ENCODE measurements at regions of chr16 and their contacts with region 1.

Region 1: DNA sequence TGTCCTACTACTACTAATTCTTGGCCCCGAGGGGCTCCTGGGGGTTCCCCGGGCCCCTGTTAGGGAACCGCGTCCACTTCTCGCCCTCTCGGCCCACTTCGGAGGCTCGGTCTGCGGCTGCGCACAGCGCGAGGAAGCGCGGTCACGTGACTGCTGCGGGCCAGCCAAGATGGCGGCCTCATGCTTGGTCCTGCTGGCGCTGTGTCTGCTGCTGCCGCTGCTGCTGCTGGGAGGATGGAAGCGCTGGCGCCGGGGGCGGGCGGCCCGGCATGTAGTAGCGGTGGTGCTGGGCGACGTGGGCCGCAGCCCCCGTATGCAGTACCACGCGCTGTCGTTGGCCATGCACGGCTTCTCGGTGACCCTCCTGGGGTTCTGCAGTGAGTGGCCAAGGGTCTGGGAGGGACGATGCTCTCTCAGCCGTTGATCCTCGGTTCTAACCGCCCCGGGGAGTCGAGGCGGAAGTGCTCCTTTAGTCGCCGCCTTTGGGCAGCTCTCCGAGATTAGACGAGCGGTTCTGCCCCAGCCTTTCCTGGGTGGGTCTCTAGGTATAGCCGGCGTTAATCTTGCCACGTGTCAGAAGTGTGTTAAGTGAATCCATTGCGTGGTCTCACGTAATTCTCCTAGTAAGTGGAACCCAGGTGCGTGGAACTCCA is at the start of gene ALG1:
- DNase-seq: peak; percentile 92
- H3K4me3 Mint-ChIP-seq: peak within 1 kb of the TSS; percentile 97
- H3K27ac Mint-ChIP-seq: peak within 1 kb of the TSS; percentile 86
- H3K4me1 Mint-ChIP-seq: peaks cover 31% of the 10 kb centered on the region
- H3K27me3 Mint-ChIP-seq: no peaks in the 10 kb centered on the region
- total RNA-seq, gene ALG1: 8.6 to 8.9 TPM

Region 2: DNA sequence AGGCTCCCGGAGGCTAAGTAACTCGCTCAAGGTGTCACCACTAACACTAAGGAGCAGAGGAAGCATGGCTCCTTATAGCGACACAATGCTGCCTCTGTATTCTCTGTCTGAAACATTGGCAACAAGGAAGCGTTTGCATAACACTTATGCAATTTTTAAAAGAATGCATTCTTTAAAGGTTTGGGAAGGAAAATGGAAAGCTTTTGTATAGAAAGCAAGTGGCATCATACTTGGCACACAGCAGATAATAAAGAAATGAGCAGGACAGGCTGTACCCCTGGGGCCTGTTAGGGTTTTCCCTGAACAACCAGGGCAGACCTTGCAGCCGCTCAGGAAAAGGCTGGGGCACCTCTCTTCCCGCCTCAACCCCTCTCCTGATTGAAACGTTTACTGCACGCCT is 171.8 kb before region 1 on chr16:
- CTCF ChIA-PET with region 1: no interaction called
- intact Hi-C with region 1: no loop called
- DNase-seq: no peak
- H3K4me3 Mint-ChIP-seq: no peak overlapping the region
- H3K27ac Mint-ChIP-seq: no peak overlapping the region
- H3K4me1 Mint-ChIP-seq: no peaks in the 10 kb centered on the region
- H3K27me3 Mint-ChIP-seq: peaks cover 6% of the 10 kb centered on the region

Region 3: GRCh38 chr16:4982056-4982867 is 89.5 kb before region 1 on chr16:
- CTCF ChIA-PET with region 1: no interaction called
- intact Hi-C with region 1: no loop called
- DNase-seq: no peak
- H3K4me3 Mint-ChIP-seq: no peak overlapping the region
- H3K27ac Mint-ChIP-seq: no peak overlapping the region
- H3K4me1 Mint-ChIP-seq: no peaks in the 10 kb centered on the region
- H3K27me3 Mint-ChIP-seq: peaks cover 9% of the 10 kb centered on the region

Region 4: GRCh38 chr16:5010576-5011329 is 61.1 kb before region 1 on chr16:
- CTCF ChIA-PET with region 1: no interaction called
- intact Hi-C with region 1: no loop called
- DNase-seq: no peak
- H3K4me3 Mint-ChIP-seq: no peak overlapping the region
- H3K27ac Mint-ChIP-seq: no peak overlapping the region
- H3K4me1 Mint-ChIP-seq: no peaks in the 10 kb centered on the region
- H3K27me3 Mint-ChIP-seq: peaks cover 7% of the 10 kb centered on the region

Region 5: DNA sequence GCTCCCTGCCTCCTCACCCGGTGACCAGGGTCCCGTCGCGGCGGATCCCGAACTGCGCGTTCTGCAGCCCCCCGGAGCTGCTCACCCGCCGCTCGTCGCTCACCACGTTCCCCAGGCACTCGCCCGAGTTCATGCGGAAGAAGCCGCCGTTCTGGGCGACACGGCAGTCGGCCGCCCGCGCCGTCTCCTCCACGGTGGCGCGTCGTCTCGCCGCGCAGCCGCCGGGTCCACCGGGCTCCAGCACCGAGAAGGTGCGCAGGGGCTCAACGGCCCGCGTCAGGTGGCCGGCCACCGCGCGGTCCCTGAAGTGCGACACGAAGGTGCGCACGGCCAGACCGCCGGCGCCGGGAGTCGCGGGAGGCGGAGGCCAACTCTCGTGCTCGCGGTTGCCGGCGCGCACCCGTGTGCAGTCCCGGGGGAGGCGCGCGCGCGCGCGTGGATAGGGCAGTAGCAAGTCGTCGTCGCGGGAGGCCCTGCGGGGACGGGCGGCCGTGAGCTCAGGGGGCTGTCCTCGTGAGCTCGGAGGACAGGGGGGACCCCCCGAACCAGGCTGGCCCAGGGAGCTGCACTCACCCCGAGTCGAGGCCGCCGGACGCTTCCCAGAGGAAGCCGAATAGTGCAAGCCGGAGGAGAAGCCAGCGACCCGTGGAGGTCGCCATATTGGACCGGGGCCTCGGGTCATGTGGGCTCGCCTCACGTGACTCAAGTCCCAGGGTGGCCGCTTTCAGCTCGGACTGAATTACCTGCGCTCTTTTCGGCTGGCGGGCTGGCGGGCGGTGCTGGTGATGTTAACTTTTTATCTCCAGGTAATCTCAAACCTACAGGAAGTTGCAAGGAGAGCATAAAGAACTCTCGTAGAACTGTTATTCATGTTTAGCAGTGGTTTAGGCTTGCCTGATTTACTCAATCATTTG is 38.3 kb before region 1 on chr16 and contains the start of gene NAGPA:
- CTCF ChIA-PET with region 1: no interaction called
- intact Hi-C with region 1: loop called (anchors 5 kb)
- DNase-seq: peak; percentile 92
- H3K4me3 Mint-ChIP-seq: peak within 1 kb of the TSS; percentile 84
- H3K27ac Mint-ChIP-seq: peak within 1 kb of the TSS; percentile 61
- H3K4me1 Mint-ChIP-seq: peaks cover 16% of the 10 kb centered on the region
- H3K27me3 Mint-ChIP-seq: no peaks in the 10 kb centered on the region
- total RNA-seq, gene NAGPA: 5.8 to 7.9 TPM

Region 6: GRCh38 chr16:5851393-5851982 is 779.7 kb after region 1 on chr16:
- CTCF ChIA-PET with region 1: no interaction called
- intact Hi-C with region 1: no loop called
- DNase-seq: no peak
- H3K4me3 Mint-ChIP-seq: no peak overlapping the region
- H3K27ac Mint-ChIP-seq: no peak overlapping the region
- H3K4me1 Mint-ChIP-seq: no peaks in the 10 kb centered on the region
- H3K27me3 Mint-ChIP-seq: no peaks in the 10 kb centered on the region